ENCODE measurements at regions of chr2 and their contacts with region 1.

Region 1: DNA sequence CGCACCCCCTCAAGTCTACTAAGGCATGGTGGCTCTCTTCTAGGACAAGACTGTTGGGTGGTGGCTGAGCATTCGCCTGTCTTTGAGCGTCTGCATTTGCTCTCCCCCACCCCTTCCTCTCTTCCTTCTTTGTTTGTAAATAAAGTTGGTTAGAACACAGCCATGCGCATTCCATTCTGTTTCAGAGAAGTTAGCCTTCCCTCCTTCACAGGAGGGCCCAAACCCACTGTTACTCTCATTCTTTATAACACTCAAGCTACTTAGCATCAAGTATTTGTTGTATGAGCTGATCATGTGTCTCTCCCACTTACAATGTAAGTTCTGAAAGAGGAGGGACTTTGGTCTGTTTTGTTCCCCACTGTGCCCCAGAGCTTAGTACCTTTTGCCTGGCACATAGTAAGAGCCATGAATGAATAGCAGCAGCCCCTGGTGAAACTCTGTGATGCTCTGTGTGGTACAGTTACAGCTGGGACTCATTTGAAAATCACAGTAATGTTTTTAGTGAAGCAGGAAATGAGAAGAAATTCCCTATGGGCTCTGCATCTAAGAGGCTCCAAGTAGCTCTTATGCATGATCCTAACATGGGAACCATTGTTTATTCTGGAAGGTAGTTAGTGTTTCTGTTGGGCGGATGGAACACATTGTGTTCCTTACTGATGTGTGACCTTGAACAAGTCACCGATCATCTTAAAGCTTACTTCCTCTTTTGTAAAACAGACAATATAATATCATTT is 7.7 kb downstream of the MGAT5 start:
- DNase-seq: no peak
- ATAC-seq: peak; percentile 41

Region 2: DNA sequence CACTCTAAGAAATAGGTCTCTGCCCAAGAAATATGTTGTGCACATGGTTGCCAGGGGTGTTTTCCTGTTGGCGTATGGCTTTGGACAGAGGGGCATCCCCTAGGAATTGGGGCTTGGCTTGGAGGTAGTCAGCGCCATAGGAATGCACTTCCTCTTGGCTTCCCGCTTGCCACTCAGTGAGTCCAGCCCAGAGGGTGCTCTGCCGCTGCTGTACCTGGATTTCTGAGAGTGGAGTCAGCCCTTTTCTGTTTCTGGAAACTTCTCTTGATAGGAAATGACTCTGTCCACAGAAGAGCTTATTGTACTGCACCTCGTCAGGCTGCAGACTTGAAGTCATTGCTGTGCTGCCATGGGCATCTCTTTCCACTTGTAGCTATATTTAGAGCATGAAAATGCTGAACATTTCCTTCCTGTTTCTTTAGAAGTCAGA is 124.4 kb before region 1 on chr2:
- intact Hi-C with region 1: loop called (anchors 5 kb)
- DNase-seq: no peak
- ATAC-seq: peak; percentile 51

Region 3: DNA sequence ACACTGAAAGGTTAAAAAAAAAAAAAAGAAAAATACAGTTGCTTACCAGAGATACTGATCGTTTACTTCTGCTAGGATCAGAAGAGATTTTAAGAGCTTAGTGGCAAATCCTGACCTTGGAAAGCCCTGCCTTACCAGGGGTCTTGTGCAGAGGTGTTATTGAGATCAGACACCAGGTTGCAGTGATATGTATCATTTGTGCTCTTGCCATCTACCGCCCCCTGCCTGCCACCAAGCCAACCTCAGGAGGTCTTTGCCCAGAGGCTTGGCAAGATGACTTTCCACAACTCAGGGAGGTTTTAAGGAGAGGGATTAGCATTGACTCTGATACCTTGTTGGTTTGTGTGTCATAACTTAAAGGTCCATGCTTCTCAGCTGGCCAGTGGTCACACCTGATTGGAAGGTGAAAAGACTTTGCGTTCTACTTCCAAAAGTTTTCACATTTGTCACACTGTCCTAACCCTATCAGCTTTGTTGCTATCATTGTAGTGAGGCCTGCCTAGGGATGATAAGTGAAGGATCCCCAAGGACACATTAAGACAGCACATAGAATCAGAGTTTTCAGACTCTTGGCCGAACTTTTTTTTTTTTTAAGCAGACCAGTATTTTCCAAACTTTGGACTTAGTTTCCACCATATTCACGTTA is 53.9 kb before region 1 on chr2:
- intact Hi-C with region 1: loop called (anchors 5 kb)
- DNase-seq: no peak
- ATAC-seq: peak; percentile 49

Region 4: DNA sequence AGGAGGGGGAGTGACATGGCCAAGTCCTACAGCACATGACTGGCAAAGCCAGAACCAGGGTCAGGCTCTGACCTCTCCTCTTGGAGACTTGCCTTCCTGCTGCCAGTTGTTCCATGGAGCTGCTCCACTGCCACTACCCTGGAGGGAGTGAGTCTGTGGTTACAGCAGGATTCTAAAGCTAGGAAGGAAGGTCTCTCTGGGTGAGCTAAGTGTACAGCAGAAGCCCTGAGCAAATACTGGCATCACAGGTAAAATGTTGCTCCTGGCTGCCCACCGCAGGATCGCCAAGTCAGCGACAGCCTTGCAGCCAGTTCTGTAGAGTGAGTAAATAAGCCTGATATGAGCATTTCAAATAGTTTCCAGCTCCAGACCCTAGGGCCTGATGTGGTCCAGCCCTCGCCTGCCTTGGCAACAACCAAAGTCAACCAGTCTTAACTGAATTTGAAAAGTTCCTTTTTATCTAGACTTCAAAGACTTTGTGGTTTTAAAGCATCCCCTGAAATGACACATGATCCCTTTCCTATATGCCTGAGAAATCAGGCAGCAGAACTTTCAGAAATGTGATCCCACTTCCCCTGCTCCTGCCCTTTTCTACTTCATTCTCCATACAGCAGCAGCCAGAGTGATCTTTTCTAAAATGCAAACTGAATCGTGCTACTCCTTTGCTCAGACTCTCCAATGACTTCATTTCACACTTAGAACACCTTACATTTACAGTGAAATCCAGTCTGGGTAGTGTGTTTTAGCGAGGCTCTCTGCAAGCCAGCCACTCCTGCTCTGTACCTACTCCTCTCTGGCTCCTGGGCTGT is 106.6 kb after region 1 on chr2:
- intact Hi-C with region 1: loop called (anchors 5 kb)
- DNase-seq: peak; percentile 50
- ATAC-seq: peak; percentile 31

Measured in Right ventricle myocardium inferior (tissue), 1 donor.